GM12878 (cell line): ENCODE measurements at regions of chr12 and their contacts with region 1.

Region 1: GRCh38 chr12:68223083-68223747 is 2.4 kb downstream of the IL26 start:
- DNase-seq: peak; percentile 71
- ATAC-seq: peak; percentile 100
- H3K4me3 ChIP-seq: no peak overlapping the region
- H3K27ac ChIP-seq: no peak overlapping the region
- H3K4me1 ChIP-seq: no peaks in the 10 kb centered on the region
- H3K27me3 ChIP-seq: no peaks in the 10 kb centered on the region; a peak in 1 of 4 replicates
- CTCF ChIP-seq: peak; percentile 79 to 84 (median 81)
- EP300 ChIP-seq: no peak
- POLR2A ChIP-seq: no peak
- RAD21 ChIP-seq: peak; percentile 98

Region 2: DNA sequence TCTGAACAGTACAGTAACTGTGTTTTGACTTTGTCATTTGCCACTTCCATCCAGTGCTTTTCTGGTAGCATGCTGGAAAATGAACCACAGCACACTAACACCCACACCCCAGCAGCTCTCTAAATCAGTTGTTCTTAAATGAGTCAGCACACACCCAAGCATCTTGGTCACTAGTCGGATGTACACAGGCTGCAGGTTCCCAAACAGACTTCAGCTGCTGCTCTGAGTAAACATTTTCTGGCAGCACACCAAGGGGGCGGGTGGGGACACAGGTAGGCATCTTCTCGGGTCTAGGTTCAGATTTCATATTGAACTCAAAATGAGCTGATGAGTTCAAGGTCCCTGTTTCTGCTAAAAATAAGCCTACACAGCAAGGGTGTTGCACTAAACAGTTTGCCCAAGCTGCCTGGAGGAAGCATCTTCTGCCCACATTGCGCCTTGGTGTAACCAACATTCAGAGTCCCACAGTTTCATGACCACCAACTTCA is 103.4 kb before region 1 on chr12:
- CTCF ChIA-PET with region 1: no interaction called
- POLR2A ChIA-PET with region 1: no interaction called
- RAD21 ChIA-PET with region 1: no interaction called
- SMC1A ChIA-PET with region 1: no interaction called
- in situ Hi-C with region 1: no loop called
- intact Hi-C with region 1: no loop called
- DNase-seq: peak; percentile 73
- ATAC-seq: peak; percentile 93
- H3K4me3 ChIP-seq: no peak overlapping the region
- H3K27ac ChIP-seq: peak overlapping the region; percentile 1; the same call in 1 of the 2 replicates
- H3K4me1 ChIP-seq: peaks cover 12% of the 10 kb centered on the region
- H3K27me3 ChIP-seq: no peaks in the 10 kb centered on the region
- CTCF ChIP-seq: no peak
- EP300 ChIP-seq: peak in 1 of 2 experiments; percentile 39; a peak in 2 of 4 replicates
- POLR2A ChIP-seq: no peak
- RAD21 ChIP-seq: no peak

Region 3: DNA sequence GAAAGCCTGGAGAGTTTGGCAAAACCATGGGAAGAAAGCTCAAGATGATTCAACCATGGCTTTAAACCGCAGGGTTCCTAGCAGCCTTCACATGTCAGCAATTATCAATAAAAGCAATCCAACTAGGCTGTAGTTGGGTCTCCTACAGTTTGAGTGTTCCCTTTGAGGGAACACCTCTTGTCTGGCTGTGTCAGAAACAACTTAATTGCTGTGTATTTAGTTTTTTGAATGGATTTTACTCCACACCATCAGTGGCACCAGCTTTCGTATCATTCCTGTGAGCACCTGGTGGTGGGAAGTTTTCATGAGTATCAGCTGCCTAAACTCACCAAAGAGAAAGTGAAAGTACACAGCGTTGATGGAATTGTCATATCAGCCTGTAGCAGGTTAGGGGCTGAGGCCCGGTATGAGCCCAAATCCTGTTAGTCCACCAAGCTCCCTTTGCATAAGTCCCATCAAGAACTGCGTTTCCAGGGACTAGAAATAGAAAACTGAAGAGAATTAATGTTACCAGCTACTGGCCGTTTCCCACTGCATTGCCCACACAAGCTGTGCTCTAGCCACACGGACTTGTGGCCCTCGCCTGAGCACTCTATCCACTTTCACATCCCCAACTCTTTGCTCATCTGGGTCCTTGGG is 13.3 kb after region 1 on chr12:
- CTCF ChIA-PET with region 1: interaction called, 31 read pairs
- POLR2A ChIA-PET with region 1: no interaction called
- RAD21 ChIA-PET with region 1: interaction called, 8 read pairs
- SMC1A ChIA-PET with region 1: interaction called, 17 read pairs
- in situ Hi-C with region 1: no loop called
- intact Hi-C with region 1: no loop called
- DNase-seq: peak; percentile 40
- ATAC-seq: peak; percentile 65
- H3K4me3 ChIP-seq: peak overlapping the region; percentile 41; the same call in 1 of the 2 replicates
- H3K27ac ChIP-seq: peak overlapping the region; percentile 69
- H3K4me1 ChIP-seq: peaks cover 34% of the 10 kb centered on the region
- H3K27me3 ChIP-seq: no peaks in the 10 kb centered on the region
- CTCF ChIP-seq: no peak; a peak in 1 of 6 replicates
- EP300 ChIP-seq: no peak
- POLR2A ChIP-seq: no peak
- RAD21 ChIP-seq: no peak

Region 4: GRCh38 chr12:68290126-68290525 is 66.9 kb after region 1 on chr12:
- CTCF ChIA-PET with region 1: interaction called, 16 read pairs
- POLR2A ChIA-PET with region 1: no interaction called
- RAD21 ChIA-PET with region 1: no interaction called
- SMC1A ChIA-PET with region 1: interaction called, 4 read pairs
- in situ Hi-C with region 1: no loop called
- intact Hi-C with region 1: no loop called
- DNase-seq: peak; percentile 93
- ATAC-seq: peak; percentile 100
- H3K4me3 ChIP-seq: no peak overlapping the region
- H3K27ac ChIP-seq: no peak overlapping the region
- H3K4me1 ChIP-seq: peaks cover 7% of the 10 kb centered on the region
- H3K27me3 ChIP-seq: no peaks in the 10 kb centered on the region
- CTCF ChIP-seq: no peak
- EP300 ChIP-seq: peak; percentile 94 to 96
- POLR2A ChIP-seq: no peak
- RAD21 ChIP-seq: no peak

Region 5: DNA sequence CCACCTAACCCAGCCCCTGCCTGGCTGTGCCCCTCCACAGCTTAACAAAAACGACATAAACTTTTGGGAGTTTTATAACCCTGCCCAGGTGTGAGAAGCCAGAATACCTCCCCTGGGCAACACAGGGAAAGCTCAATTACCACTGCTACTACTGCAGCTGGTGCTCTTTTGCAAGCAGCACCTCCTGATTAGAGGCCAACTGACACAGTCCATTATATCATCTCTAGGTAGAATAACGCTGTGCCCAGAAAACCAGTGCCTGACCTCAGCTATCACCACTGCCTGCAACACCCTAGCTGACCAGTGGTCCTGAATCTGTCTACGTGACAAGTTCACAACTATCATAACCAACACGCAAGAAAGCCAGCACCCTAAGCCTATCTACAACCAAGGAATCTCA is 74.7 kb after region 1 on chr12:
- CTCF ChIA-PET with region 1: interaction called, 5 read pairs
- POLR2A ChIA-PET with region 1: no interaction called
- RAD21 ChIA-PET with region 1: no interaction called
- SMC1A ChIA-PET with region 1: interaction called, 13 read pairs
- in situ Hi-C with region 1: no loop called
- intact Hi-C with region 1: no loop called
- DNase-seq: no peak
- ATAC-seq: no peak
- H3K4me3 ChIP-seq: no peak overlapping the region
- H3K27ac ChIP-seq: no peak overlapping the region
- H3K4me1 ChIP-seq: no peaks in the 10 kb centered on the region
- H3K27me3 ChIP-seq: no peaks in the 10 kb centered on the region
- CTCF ChIP-seq: no peak
- EP300 ChIP-seq: no peak
- POLR2A ChIP-seq: no peak
- RAD21 ChIP-seq: no peak

Region 6: DNA sequence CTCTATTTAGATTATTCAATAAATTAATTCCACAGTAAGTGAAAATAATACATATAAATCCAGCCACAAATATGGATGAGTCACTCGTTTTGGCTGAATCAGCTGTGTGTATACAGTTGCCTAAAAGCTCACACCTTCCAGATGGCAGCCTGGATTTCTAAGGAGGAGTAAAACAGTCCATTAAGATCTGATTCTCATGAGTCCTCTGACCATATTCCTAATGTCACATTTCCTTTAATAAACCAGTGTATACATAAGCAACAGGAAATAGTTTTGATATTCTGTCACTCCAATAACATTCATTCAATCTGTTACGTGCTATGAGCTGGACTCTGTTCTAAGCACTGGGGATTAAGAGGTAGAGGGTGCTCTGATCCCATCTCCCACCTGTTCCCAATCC is 87.2 kb after region 1 on chr12:
- CTCF ChIA-PET with region 1: interaction called, 189 read pairs
- POLR2A ChIA-PET with region 1: no interaction called
- RAD21 ChIA-PET with region 1: interaction called, 72 read pairs
- SMC1A ChIA-PET with region 1: interaction called, 147 read pairs
- in situ Hi-C with region 1: no loop called
- intact Hi-C with region 1: no loop called
- DNase-seq: no peak
- ATAC-seq: no peak
- H3K4me3 ChIP-seq: no peak overlapping the region
- H3K27ac ChIP-seq: no peak overlapping the region
- H3K4me1 ChIP-seq: no peaks in the 10 kb centered on the region
- H3K27me3 ChIP-seq: no peaks in the 10 kb centered on the region
- CTCF ChIP-seq: no peak
- EP300 ChIP-seq: no peak
- POLR2A ChIP-seq: no peak
- RAD21 ChIP-seq: no peak

Region 7: DNA sequence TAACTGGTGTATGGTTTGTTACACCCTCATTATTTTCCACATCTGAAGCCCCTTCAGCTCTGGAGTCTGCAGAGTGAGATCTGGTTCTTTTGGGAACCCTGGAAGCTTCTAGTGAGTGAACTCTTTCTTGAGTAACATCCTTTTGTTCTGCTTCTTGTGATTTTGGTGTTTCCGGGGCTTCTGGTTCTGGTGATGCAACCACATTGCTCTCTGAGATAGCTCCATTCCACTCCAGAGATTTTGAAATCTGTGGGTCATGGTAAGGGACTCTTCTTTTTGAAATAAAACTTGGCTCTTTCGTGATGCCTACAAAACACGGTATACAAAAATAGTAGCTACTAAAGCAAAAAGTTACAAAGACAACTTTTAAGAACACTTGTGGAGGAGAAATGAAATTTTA is 103.5 kb after region 1 on chr12:
- CTCF ChIA-PET with region 1: interaction called, 60 read pairs
- POLR2A ChIA-PET with region 1: interaction called, 3 read pairs
- RAD21 ChIA-PET with region 1: interaction called, 13 read pairs
- SMC1A ChIA-PET with region 1: interaction called, 39 read pairs
- in situ Hi-C with region 1: no loop called
- intact Hi-C with region 1: no loop called
- DNase-seq: no peak
- ATAC-seq: no peak
- H3K4me3 ChIP-seq: no peak overlapping the region
- H3K27ac ChIP-seq: no peak overlapping the region
- H3K4me1 ChIP-seq: no peaks in the 10 kb centered on the region
- H3K27me3 ChIP-seq: no peaks in the 10 kb centered on the region
- CTCF ChIP-seq: no peak
- EP300 ChIP-seq: no peak
- POLR2A ChIP-seq: no peak
- RAD21 ChIP-seq: no peak